ENCODE measurements at regions of chr6 and their contacts with region 1.

Region 1: DNA sequence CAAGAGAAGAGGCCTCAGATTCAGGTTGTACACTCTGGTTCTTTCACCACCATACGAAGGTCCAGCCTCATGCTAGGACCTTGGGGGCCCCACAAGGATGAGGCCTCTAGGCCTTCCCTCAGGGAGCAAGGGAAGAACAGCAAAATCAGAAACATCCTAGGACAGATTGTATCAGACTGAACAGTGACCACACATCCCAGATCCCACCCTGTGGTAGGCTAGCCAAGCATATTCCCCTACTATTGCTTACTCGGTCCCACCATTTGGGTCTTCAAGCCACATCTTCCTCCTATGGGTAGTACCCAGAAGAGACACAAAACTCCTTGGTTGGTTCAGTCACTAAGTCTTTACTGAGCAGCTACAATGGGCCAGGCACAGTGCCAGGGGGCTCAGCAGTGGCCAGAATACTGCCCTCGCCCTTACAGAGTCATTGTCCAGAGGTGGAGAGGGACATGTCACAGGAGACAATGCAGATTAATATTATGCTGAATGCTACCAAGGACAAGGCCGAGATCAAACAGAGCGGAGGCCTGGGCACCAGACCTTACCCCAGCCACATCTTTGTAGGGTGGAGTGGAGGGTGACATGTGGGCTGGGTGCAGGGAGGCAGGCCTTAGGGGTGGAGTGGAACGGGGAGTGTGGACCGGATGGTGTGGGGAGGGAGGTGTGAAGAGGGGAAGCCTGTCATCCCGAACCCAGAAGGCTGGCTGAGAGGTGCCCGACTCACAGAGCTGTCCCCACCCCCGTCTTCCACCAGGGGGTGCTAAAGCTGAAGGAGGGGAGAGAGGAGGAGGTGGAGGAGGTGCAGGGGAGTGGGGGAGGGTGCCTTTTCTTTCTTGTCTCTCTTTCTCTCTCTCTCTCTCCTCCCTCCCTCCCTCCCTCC is 6.8 kb upstream of the MAPK13 start:
- DNase-seq: peak; percentile 73 to 91 (median 90)
- ATAC-seq: peak; percentile 78 to 84
- H3K4me3 ChIP-seq: no peak overlapping the region
- H3K27ac ChIP-seq: no peak overlapping the region
- H3K4me1 ChIP-seq: peaks cover 7% of the 10 kb centered on the region
- H3K27me3 ChIP-seq: no peaks in the 10 kb centered on the region

Region 2: DNA sequence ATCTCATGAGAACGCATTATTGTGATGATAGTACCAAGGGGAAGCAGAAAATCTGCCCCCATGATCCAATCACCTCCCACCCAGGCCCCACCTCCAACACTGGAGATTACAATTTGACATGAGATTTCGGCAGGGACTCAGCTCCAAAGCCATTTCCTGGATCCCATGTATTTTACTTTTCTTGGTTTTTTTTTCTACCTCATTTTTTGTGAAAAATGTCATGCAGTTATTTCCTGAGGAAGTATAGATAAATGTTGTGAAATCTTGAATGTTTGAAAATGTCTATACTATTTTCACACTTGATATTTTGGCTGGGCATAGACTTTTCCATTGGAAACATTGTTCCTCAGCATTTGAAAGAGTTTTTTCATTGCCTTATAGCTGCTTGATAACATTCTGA is 63.9 kb after region 1 on chr6:
- intact Hi-C with region 1: loop called in 1 of 4 experiments (anchors 10 kb)
- DNase-seq: no peak
- ATAC-seq: no peak
- H3K4me3 ChIP-seq: no peak overlapping the region
- H3K27ac ChIP-seq: no peak overlapping the region
- H3K4me1 ChIP-seq: no peaks in the 10 kb centered on the region
- H3K27me3 ChIP-seq: no peaks in the 10 kb centered on the region

Region 3: GRCh38 chr6:36196880-36197548 is 73.5 kb after region 1 on chr6:
- intact Hi-C with region 1: loop called in 1 of 4 experiments (anchors 5 kb)
- DNase-seq: peak; percentile 99 to 100 (median 100)
- ATAC-seq: peak; percentile 98
- H3K4me3 ChIP-seq: peak overlapping the region; percentile 83
- H3K27ac ChIP-seq: peak overlapping the region; percentile 83
- H3K4me1 ChIP-seq: peaks cover 7% of the 10 kb centered on the region
- H3K27me3 ChIP-seq: no peaks in the 10 kb centered on the region

Region 4: GRCh38 chr6:36350681-36351571 is 227.4 kb after region 1 on chr6:
- intact Hi-C with region 1: loop called in 1 of 4 experiments (anchors 10 kb)
- DNase-seq: peak in 2 of 3 donors; percentile 66 to 69
- ATAC-seq: peak; percentile 70 to 92
- H3K4me3 ChIP-seq: no peak overlapping the region
- H3K27ac ChIP-seq: peak overlapping the region; percentile 61
- H3K4me1 ChIP-seq: peaks cover 7% of the 10 kb centered on the region
- H3K27me3 ChIP-seq: no peaks in the 10 kb centered on the region

Region 5: DNA sequence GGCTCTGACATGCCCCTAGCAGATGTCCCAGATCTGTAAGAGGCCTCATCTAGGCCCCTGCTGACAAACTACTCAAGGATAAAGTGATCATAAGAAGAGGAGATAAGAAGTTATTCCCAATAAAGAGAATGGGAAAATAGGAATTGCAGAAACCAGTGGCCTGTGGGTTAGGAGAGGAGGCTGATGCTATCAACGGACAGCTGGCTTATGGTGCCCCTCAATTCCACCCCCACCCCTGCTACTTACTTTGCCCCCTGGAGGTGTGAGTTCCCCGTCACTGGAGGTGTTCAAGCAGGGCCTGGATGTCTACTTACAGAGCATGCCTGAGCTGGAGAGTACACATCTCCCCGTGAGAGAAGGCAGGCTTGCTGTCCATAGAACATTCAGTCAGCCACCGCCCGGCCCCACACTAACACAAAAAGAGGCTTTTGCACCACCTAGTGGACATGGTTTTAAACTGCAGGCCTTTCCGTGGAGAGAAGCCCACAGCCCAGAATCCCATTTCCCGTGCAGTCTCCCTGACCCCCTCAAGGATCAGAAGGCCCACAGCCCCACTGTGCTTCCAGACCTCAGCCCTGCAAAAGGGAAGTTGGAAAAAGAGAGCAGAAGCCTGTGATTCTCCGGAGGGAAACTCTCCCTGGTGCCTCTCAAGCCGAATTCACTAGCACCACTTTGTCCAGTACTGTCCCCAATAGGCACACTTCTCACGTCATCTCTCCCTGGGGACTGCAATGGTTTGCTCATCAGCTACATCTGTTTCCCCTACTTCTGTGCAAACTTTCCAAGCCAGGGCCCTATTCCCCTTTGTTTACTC is 236.9 kb after region 1 on chr6:
- intact Hi-C with region 1: loop called in 3 of 4 experiments (anchors 10 kb)
- DNase-seq: peak; percentile 79 to 92 (median 85)
- ATAC-seq: peak; percentile 91 to 92
- H3K4me3 ChIP-seq: no peak overlapping the region
- H3K27ac ChIP-seq: no peak overlapping the region
- H3K4me1 ChIP-seq: peaks cover 3% of the 10 kb centered on the region
- H3K27me3 ChIP-seq: no peaks in the 10 kb centered on the region

Region 6: DNA sequence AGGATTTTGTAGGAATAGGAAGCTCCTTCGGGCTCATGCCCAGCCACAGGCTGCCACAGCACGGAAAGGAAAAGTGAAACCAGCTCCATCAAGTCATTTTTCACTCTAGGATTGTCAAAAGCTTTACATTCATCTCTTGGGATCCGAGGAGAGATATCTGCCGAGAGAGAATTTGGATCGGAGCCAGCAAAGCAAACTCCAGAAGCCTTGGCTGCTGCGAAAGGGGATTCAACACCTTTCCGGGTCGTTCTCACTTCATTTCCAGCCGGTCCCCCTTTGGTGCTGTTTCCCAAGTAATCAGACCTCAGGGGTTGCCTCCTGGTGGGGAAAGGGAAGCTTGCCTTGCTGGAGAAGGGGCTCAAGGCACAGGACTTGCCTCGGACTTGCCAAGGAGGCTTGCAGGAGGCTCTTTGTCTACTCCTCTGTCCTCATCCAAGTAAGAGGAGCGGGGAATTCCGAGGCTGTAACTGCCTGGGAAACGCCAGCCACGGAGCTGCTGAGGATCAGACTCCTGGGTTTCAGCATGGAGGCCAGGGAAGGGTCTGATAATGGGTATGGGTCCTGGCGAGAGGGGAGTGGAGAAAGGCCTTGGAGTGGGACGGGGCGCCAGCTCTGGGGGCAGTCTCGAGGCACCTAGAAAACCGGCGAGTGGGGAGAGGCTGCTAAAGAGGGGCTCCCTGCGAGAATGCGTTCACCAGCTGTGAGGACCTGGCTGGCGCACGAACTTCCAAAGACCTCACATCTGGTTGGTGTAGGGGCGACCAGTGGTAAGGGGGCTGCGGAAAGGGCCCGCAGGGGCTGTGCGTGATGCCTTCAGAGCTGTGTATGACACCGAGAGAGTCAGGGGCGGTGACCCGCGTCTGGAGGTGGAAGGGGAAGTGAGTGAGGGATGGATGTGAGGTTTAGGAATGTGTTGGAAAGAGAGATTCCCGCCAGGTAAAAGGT is 263.3 kb after region 1 on chr6:
- intact Hi-C with region 1: no loop called
- DNase-seq: peak in 2 of 3 donors; percentile 22 to 61
- ATAC-seq: peak; percentile 58 to 67
- H3K4me3 ChIP-seq: peak overlapping the region; percentile 95
- H3K27ac ChIP-seq: peak overlapping the region; percentile 20
- H3K4me1 ChIP-seq: no peaks in the 10 kb centered on the region
- H3K27me3 ChIP-seq: no peaks in the 10 kb centered on the region